ENCODE measurements at regions of chr1 and their contacts with region 1.

Region 1: GRCh38 chr1:16243936-16244649 is 7.1 kb upstream of the CPLANE2 start:
- DNase-seq: no peak
- H3K4me3 ChIP-seq: peak overlapping the region in 1 of 4 donors; percentile 16
- H3K27ac ChIP-seq: peak overlapping the region; percentile 30 to 67 (median 38)
- H3K4me1 ChIP-seq: peaks cover 25 to 69% (median 35%) of the 10 kb centered on the region in 3 donors
- H3K27me3 ChIP-seq: no peaks in the 10 kb centered on the region
- CTCF ChIP-seq: peak; percentile 82 to 95 (median 90)
- POLR2A ChIP-seq: no peak

Region 2: DNA sequence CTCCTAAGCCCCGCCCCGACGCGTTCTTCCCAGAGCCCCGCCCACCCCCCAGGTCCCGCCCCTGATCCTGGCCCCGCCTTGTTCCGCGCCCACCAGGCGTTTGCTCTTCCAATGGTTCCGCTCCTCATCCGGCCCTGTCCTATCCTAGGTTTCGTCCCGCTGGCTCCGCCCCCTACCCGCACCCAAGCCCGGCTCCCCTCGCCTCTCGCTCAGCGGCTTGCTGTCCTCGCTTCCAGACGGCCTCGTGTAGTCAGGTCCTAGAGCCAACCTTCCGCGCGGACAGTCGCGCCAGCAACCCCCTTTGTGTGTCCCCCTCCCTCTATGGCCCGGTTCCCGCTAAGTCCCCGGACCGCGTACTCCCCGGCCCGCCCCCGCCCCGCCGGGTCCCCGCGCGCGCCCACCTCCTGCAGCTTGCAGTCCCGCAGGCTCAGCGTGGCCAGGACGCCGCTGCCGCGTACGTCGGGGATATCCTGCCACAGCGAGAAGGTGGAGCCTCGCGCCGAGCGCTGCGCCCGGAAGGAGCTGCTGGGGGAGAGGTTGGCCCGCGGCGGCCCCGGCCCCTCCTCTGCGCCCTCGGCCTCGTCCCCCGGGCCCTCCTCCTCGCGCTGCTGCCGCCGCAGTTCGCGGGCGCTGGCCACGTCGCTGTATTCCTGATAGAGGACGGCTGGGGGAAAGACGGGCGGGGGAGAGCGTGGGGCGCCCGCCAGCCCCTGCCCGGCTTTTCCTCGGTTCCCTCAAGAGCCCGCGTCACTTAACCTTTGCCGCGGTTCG is 37.4 kb before region 1 on chr1:
- intact Hi-C with region 1: loop called (anchors 5 kb)
- DNase-seq: peak; percentile 71
- H3K4me3 ChIP-seq: peak overlapping the region; percentile 40 to 70 (median 52)
- H3K27ac ChIP-seq: peak overlapping the region; percentile 88 to 98 (median 92)
- H3K4me1 ChIP-seq: peaks cover 32 to 66% (median 36%) of the 10 kb centered on the region in 3 donors
- H3K27me3 ChIP-seq: no peaks in the 10 kb centered on the region
- CTCF ChIP-seq: no peak
- POLR2A ChIP-seq: peak in 2 of 4 donors; percentile 36 to 75